Activated CD8-positive, alpha-beta T cell treated with anti-CD3 and anti-CD28 coated beads for 36 hours (primary cell): ENCODE measurements at regions of chr7 and their contacts with region 1.

Region 1: DNA sequence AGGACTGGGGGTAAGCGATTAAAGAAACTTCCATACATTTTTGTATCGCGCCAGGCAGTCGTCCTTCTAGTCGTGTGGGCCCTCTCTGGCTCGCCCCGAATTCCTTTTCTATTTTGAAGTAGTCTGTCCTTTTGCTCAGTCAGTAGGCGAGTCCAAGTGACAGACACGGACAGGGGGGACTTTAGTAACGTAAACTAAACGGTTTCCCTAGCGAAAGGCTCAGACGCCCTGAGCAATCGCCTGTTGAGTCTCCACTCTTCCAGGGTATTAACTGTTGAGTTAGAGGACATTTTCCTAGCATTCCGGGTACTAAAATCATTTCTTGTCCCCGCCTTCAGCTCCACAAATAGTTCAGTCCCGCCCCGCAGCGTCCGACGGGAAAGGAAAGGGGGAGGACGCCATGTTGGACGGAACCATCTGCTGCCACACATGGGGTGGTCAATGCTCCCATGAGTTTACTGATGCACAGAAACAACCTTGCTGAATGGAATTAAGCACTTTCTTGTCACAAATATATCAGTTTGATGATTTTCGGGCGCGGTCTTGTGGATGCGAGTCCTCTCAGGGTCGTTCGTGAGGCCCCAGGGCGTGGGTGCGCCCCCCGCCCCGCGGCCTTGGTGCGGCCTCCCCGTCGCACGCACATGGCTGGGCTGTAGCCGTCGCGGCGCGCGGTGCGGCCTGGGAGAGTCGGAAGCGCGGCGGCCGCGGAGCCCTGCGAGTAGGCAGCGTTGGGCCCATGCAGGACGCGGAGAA is at the start of gene EIF3B:
- DNase-seq: peak; percentile 93
- ATAC-seq: peak; percentile 87
- H3K4me3 Mint-ChIP-seq: peak within 1 kb of the TSS; percentile 90
- H3K27ac Mint-ChIP-seq: peak within 1 kb of the TSS; percentile 99
- H3K4me1 Mint-ChIP-seq: peaks cover 30% of the 10 kb centered on the region
- H3K27me3 Mint-ChIP-seq: no peaks in the 10 kb centered on the region
- CTCF ChIP-seq: no peak
- total RNA-seq, gene EIF3B: 252 to 256 TPM

Region 2: GRCh38 chr7:2232766-2233520 is 121.4 kb before region 1 on chr7 and contains the start of gene MAD1L1:
- CTCF ChIA-PET with region 1: interaction called, 14 read pairs
- POLR2A ChIA-PET with region 1: interaction called, 3 read pairs
- intact Hi-C with region 1: no loop called
- DNase-seq: peak; percentile 91
- ATAC-seq: peak; percentile 96
- H3K4me3 Mint-ChIP-seq: peak within 1 kb of the TSS; percentile 89
- H3K27ac Mint-ChIP-seq: peak within 1 kb of the TSS; percentile 87
- H3K4me1 Mint-ChIP-seq: peaks cover 29% of the 10 kb centered on the region
- H3K27me3 Mint-ChIP-seq: no peaks in the 10 kb centered on the region
- CTCF ChIP-seq: no peak
- total RNA-seq, gene MAD1L1: 40.0 to 44.7 TPM

Region 3: GRCh38 chr7:2241580-2242540 is 112.5 kb before region 1 on chr7 and contains the starts of genes MRM2 and NUDT1:
- CTCF ChIA-PET with region 1: no interaction called
- POLR2A ChIA-PET with region 1: interaction called, 13 read pairs
- intact Hi-C with region 1: loop called (anchors 2 kb)
- DNase-seq: peak; percentile 79
- ATAC-seq: peak; percentile 86
- H3K4me3 Mint-ChIP-seq: peak within 1 kb of the TSS; percentile 92
- H3K27ac Mint-ChIP-seq: peak within 1 kb of the TSS; percentile 93
- H3K4me1 Mint-ChIP-seq: peaks cover 21% of the 10 kb centered on the region
- H3K27me3 Mint-ChIP-seq: no peaks in the 10 kb centered on the region
- CTCF ChIP-seq: no peak
- total RNA-seq, gene MRM2: 30.3 to 31.9 TPM
- total RNA-seq, gene NUDT1: 90.2 to 93.9 TPM

Region 4: GRCh38 chr7:2985866-2986265 is 631.5 kb after region 1 on chr7:
- CTCF ChIA-PET with region 1: no interaction called
- POLR2A ChIA-PET with region 1: no interaction called
- intact Hi-C with region 1: no loop called
- DNase-seq: no peak
- ATAC-seq: no peak
- H3K4me3 Mint-ChIP-seq: no peak overlapping the region
- H3K27ac Mint-ChIP-seq: no peak overlapping the region
- H3K4me1 Mint-ChIP-seq: peaks cover 63% of the 10 kb centered on the region
- H3K27me3 Mint-ChIP-seq: no peaks in the 10 kb centered on the region
- CTCF ChIP-seq: no peak